Heart right ventricle (tissue), 16 donors: ENCODE measurements at regions of chr22 and their contacts with region 1.

Region 1: GRCh38 chr22:26143801-26144325 is 25.4 kb upstream of the SEZ6L start:
- DNase-seq: no peak
- ATAC-seq: no peak
- H3K4me3 ChIP-seq: no peak overlapping the region
- H3K27ac ChIP-seq: no peak overlapping the region
- H3K4me1 ChIP-seq: no peaks in the 10 kb centered on the region
- H3K27me3 ChIP-seq: peaks cover 0 to 69% (median 21%) of the 10 kb centered on the region in 7 donors
- CTCF ChIP-seq: no peak

Region 2: DNA sequence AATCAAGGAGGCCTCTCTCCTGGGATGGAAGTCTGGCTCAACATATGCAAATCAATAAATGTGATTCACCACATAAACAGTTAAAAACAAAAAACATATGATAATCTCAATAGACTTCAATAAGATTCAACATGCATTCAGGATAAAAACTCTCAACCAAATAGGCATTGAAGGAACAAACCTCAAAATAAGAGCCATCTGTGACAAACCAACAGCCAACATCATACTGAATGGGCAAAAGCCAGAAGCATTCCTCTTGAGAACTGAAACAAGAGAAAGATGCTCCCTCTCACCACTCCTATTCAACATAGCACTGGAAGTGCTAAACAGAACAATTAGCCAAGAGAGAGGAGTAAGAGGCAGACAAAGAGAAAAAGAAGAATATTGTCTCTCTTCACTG is 28.6 kb before region 1 on chr22:
- intact Hi-C with region 1: loop called in 1 of 10 experiments (anchors 1 kb)
- DNase-seq: no peak
- ATAC-seq: no peak
- H3K4me3 ChIP-seq: no peak overlapping the region
- H3K27ac ChIP-seq: no peak overlapping the region
- H3K4me1 ChIP-seq: no peaks in the 10 kb centered on the region
- H3K27me3 ChIP-seq: peaks cover 0 to 71% (median 32%) of the 10 kb centered on the region in 7 donors
- CTCF ChIP-seq: no peak

Region 3: GRCh38 chr22:26161746-26162145 is 17.9 kb after region 1 on chr22:
- intact Hi-C with region 1: no loop called
- DNase-seq: no peak
- ATAC-seq: no peak
- H3K4me3 ChIP-seq: no peak overlapping the region
- H3K27ac ChIP-seq: no peak overlapping the region
- H3K4me1 ChIP-seq: no peaks in the 10 kb centered on the region
- H3K27me3 ChIP-seq: peaks cover 0 to 77% (median 56%) of the 10 kb centered on the region in 7 donors
- CTCF ChIP-seq: no peak

Region 4: GRCh38 chr22:26199667-26200066 is 55.8 kb after region 1 on chr22:
- intact Hi-C with region 1: loop called in 1 of 10 experiments (anchors 10 kb)
- DNase-seq: no peak
- ATAC-seq: no peak
- H3K4me3 ChIP-seq: no peak overlapping the region
- H3K27ac ChIP-seq: no peak overlapping the region
- H3K4me1 ChIP-seq: no peaks in the 10 kb centered on the region
- H3K27me3 ChIP-seq: peaks cover 0 to 47% (median 17%) of the 10 kb centered on the region in 7 donors
- CTCF ChIP-seq: no peak